ENCODE measurements at regions of chr19 and their contacts with region 1.

Region 1: GRCh38 chr19:3304871-3305423 is 61.4 kb upstream of the NFIC start:
- DNase-seq: peak in 1 of 2 donors; percentile 81
- H3K4me3 ChIP-seq: no peak overlapping the region
- H3K27ac ChIP-seq: no peak overlapping the region
- H3K4me1 ChIP-seq: peaks cover 0 to 3% of the 10 kb centered on the region in 2 donors
- H3K27me3 ChIP-seq: peaks cover 4% of the 10 kb centered on the region
- CTCF ChIP-seq: peak; percentile 81 to 94 (median 84)

Region 2: GRCh38 chr19:3479177-3479833 is 174.4 kb after region 1 on chr19:
- intact Hi-C with region 1: loop called (anchors 2 kb)
- DNase-seq: no peak
- H3K4me3 ChIP-seq: no peak overlapping the region
- H3K27ac ChIP-seq: no peak overlapping the region
- H3K4me1 ChIP-seq: no peaks in the 10 kb centered on the region
- H3K27me3 ChIP-seq: peaks cover 2% of the 10 kb centered on the region
- CTCF ChIP-seq: no peak